Heart left ventricle (tissue), 16 donors: ENCODE measurements at regions of chr12 and their contacts with region 1.

Region 1: GRCh38 chr12:57213058-57213715 is 3.4 kb upstream of the NXPH4 start:
- DNase-seq: peak; percentile 87 to 90 (median 88)
- ATAC-seq: peak; percentile 49 to 78 (median 56)
- H3K4me3 ChIP-seq: peak overlapping the region in 1 of 12 donors; percentile 4
- H3K27ac ChIP-seq: peak overlapping the region in 9 of 12 donors; percentile 15 to 65 (median 58)
- H3K4me1 ChIP-seq: peaks cover 12 to 61% (median 43%) of the 10 kb centered on the region in 12 donors
- H3K27me3 ChIP-seq: peaks cover 3 to 37% (median 23%) of the 10 kb centered on the region in 9 donors
- CTCF ChIP-seq: peak; percentile 88 to 97 (median 94)
- POLR2A ChIP-seq: no peak

Region 2: GRCh38 chr12:57229634-57230380 is 16.6 kb after region 1 on chr12 and contains the start of gene SHMT2:
- intact Hi-C with region 1: loop called in 1 of 10 experiments (anchors 2 kb)
- DNase-seq: peak; percentile 94 to 97 (median 97)
- ATAC-seq: peak; percentile 68 to 90 (median 70)
- H3K4me3 ChIP-seq: peak within 1 kb of the TSS; percentile 43 to 82 (median 64)
- H3K27ac ChIP-seq: peak within 1 kb of the TSS in 11 of 12 donors; percentile 25 to 89 (median 74)
- H3K4me1 ChIP-seq: peaks cover 0 to 72% (median 21%) of the 10 kb centered on the region in 12 donors
- H3K27me3 ChIP-seq: peaks cover 10 to 28% (median 25%) of the 10 kb centered on the region in 9 donors
- CTCF ChIP-seq: peak in 1 of 12 donors; percentile 5
- POLR2A ChIP-seq: peak in 1 of 2 donors; percentile 29
- total RNA-seq, gene SHMT2: 26.2 to 46.7 (median 35.5) TPM

Region 3: DNA sequence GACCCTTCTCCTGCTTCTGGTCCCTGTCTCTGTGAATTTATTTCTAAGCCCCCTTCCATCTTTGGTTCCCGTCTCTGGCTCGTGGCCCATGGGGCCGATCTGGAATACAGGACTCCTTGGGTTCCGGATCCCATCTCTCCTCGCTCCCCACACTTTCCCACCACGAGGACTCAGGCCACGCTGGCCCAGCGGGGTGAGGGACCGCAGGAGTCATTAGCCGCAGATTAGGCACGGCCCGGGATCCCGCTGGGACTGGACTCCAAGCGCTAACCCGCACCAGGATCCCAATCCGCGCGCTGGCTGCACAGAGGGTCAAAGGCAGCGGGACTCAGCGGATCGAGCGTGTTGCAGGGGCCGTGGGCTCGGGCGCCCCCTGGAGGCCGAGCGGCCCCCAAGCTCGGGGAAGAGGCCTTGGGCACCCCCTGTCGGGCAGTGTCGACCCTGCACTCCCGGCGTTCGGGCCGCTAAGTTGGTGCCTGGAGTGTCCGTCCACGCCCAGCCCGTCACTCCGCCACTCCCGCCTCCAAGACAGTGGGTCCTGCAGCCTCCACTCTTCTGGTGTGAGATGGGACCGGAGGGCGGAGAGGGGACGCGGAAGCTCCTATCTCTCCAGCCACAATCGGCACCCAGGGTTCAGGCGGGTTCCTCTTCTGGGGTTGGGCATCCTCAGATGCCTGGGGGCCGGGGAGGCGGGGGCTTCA is 25.8 kb after region 1 on chr12:
- intact Hi-C with region 1: loop called (anchors 1 to 2 kb)
- DNase-seq: peak; percentile 88 to 96 (median 90)
- ATAC-seq: peak; percentile 43 to 74 (median 70)
- H3K4me3 ChIP-seq: peak overlapping the region; percentile 18 to 66 (median 56)
- H3K27ac ChIP-seq: peak overlapping the region in 11 of 12 donors; percentile 7 to 86 (median 49)
- H3K4me1 ChIP-seq: peaks cover 5 to 99% (median 54%) of the 10 kb centered on the region in 12 donors
- H3K27me3 ChIP-seq: peaks cover 4 to 78% (median 36%) of the 10 kb centered on the region in 9 donors
- CTCF ChIP-seq: peak; percentile 100
- POLR2A ChIP-seq: peak in 1 of 2 donors; percentile 41

Region 4: DNA sequence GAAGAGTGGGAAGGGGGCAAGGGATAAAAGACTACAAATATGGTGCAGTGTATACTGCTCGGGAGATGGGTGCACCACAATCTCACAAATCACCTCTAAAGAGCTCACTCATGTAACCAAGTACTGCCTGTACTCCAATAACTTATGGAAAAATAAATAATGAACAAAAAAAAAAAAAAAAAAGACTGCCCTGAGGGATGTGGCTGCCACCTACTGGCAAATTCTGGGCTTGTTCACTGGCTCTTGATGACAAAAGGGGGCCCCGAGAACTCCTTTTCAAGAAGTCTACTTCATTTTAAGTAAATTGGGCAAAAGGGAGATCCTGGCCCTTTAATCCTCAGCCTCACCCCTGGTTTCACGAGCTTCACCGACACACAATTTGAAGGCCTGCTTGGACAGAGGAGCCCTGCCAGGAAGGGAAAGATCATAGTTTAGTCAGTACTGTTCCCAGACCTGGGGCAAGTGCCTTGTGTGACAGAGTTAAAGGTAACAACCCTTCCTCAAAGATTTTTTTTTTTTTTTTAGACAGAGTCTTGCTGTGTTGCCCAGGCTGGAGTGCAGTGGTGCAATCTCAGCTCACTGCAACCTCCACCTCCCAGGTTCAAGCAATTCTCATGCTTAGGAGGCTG is 63.9 kb after region 1 on chr12:
- intact Hi-C with region 1: loop called in 4 of 10 experiments (anchors 1 to 5 kb)
- DNase-seq: peak in 1 of 5 donors; percentile 39
- ATAC-seq: peak in 1 of 4 donors; percentile 13
- H3K4me3 ChIP-seq: no peak overlapping the region
- H3K27ac ChIP-seq: no peak overlapping the region
- H3K4me1 ChIP-seq: peaks cover 0 to 23% (median 13%) of the 10 kb centered on the region in 12 donors
- H3K27me3 ChIP-seq: no peaks in the 10 kb centered on the region
- CTCF ChIP-seq: peak; percentile 23 to 56 (median 43)
- POLR2A ChIP-seq: no peak

Region 5: DNA sequence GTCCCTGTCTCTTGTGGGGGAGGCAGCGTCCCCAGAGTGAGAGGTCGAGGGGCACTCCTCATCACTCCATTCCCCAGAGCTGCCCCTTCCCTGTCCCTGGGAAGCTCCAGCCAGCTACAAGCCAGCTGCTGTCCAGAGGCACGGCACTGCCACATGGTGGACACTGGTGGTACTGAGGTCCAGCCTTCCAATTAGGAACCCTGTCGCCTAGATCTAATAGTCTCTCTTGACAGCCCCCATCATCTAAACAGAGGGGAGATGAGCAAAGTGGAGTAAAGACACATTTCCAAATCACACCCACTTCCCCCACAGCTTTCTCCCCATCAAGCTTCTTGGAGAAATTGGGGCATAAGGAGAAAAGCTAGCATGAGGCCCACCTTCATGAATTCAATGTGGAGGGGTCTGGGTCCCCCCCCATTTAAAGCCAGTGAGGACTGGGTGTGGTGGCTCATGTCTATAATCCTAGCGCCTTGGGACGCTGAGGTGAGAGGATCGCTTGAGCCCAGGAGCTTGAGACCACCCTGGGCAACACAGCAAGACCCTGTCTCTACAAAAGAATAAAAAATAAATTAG is 239.8 kb after region 1 on chr12:
- intact Hi-C with region 1: loop called in 3 of 10 experiments (anchors 2 to 5 kb)
- DNase-seq: peak; percentile 83 to 89 (median 87)
- ATAC-seq: peak; percentile 75 to 86 (median 82)
- H3K4me3 ChIP-seq: no peak overlapping the region
- H3K27ac ChIP-seq: peak overlapping the region; percentile 61 to 96 (median 84)
- H3K4me1 ChIP-seq: peaks cover 0 to 31% (median 12%) of the 10 kb centered on the region in 12 donors
- H3K27me3 ChIP-seq: no peaks in the 10 kb centered on the region
- CTCF ChIP-seq: peak; percentile 79 to 96 (median 90)
- POLR2A ChIP-seq: no peak

Region 6: DNA sequence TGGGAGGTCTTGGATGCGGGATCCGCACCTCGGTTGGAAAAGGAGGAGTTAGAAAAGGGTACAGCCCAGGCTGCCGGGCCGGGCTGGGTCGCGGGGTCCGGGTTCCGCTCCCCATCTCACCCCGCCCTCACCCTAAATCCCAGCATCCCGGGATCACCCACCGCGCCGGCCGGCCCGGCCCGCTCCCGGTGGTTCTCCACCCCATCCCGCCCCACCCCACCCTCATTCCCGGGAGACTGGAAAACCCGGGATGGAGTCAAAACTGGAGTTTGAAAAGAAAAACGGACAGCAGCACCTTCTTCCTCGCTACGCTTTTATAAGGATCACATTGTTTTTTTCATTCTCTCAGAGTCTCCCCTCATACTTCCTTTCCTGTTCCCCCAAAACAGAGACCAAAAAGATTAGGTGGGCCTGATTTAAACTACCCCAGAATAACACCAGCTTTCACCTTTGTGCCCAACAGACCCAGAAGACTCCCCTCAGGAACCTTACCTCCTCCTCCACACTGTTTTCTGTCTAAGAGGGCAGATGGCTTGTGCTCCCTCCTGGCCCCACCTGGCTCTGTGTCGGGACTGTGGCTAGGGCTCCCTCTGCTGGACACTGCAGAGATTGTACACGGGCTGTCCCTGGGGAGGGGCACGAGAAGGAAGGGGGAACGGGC is 249.2 kb after region 1 on chr12:
- intact Hi-C with region 1: loop called in 3 of 10 experiments (anchors 1 to 5 kb)
- DNase-seq: peak; percentile 85 to 91 (median 85)
- ATAC-seq: peak; percentile 68 to 77 (median 74)
- H3K4me3 ChIP-seq: peak overlapping the region; percentile 53 to 82 (median 68)
- H3K27ac ChIP-seq: peak overlapping the region; percentile 37 to 86 (median 72)
- H3K4me1 ChIP-seq: peaks cover 0 to 41% (median 21%) of the 10 kb centered on the region in 12 donors
- H3K27me3 ChIP-seq: peaks cover 0 to 9% (median 0%) of the 10 kb centered on the region in 9 donors
- CTCF ChIP-seq: peak; percentile 89 to 99 (median 94)
- POLR2A ChIP-seq: peak in 1 of 2 donors; percentile 22